ENCODE measurements at regions of chr15 and their contacts with region 1.

Region 1: DNA sequence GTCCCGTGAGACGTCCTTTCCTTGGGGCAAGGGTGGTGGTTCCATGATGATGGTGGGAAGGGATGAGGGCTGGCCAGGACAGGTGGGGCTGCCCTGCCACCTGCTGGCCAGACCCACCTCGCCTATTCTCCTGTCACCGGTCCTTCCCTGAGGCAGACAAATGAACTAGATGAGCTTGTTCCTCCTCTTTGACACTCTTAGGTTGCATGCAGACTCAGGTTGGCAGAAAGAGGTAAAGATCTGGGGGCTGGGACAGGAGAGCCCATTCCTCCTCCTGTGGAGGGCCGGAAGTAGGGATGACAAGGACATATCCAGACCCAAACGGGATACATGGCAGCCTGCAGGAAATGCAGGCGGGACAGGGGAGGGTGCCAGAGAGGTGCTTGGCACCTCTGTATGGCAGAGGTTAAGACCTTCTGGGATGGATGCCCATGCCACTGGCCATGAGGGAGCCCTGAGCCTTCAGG is 38.6 kb downstream of the ACSBG1 start:
- DNase-seq: peak; percentile 50
- H3K4me3 Mint-ChIP-seq: no peak overlapping the region
- H3K27ac Mint-ChIP-seq: no peak overlapping the region
- H3K4me1 Mint-ChIP-seq: no peaks in the 10 kb centered on the region
- H3K27me3 Mint-ChIP-seq: peaks cover 16% of the 10 kb centered on the region
- CTCF ChIP-seq: peak; percentile 66

Region 2: DNA sequence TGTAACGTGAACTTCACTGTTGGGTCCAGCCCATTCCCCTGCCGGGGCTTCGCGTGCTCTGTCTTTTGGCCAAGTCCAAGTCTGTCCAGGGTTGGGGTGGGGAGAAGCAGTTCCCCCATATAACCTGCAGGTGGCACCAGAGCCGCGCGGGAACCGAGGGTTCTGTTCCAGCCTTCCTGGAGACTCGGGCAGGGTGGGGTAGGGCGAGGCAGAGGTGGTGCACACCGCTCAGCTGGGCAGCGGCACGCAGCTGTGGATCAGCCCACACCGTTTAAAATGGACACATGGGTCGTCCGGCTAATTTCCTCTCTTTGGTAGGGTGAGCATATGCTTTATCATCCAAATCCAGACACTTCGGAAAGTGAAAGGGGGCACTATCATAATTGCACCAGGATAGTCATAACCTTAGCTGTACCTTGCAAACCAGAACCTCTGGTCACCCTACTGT is 236.3 kb before region 1 on chr15:
- CTCF ChIA-PET with region 1: interaction called, 5 read pairs
- POLR2A ChIA-PET with region 1: no interaction called
- intact Hi-C with region 1: loop called (anchors 1 kb)
- DNase-seq: peak; percentile 77
- H3K4me3 Mint-ChIP-seq: peak overlapping the region; percentile 35
- H3K27ac Mint-ChIP-seq: no peak overlapping the region
- H3K4me1 Mint-ChIP-seq: peaks cover 6% of the 10 kb centered on the region
- H3K27me3 Mint-ChIP-seq: peaks cover 20% of the 10 kb centered on the region
- CTCF ChIP-seq: peak; percentile 94

Region 3: GRCh38 chr15:78131295-78132061 is 64.3 kb before region 1 on chr15 and contains the start of gene CIB2:
- CTCF ChIA-PET with region 1: interaction called, 30 read pairs
- POLR2A ChIA-PET with region 1: no interaction called
- intact Hi-C with region 1: loop called (anchors 1 kb)
- DNase-seq: peak; percentile 41
- H3K4me3 Mint-ChIP-seq: peak within 1 kb of the TSS; percentile 72
- H3K27ac Mint-ChIP-seq: peak within 1 kb of the TSS; percentile 59
- H3K4me1 Mint-ChIP-seq: peaks cover 5% of the 10 kb centered on the region
- H3K27me3 Mint-ChIP-seq: no peaks in the 10 kb centered on the region
- CTCF ChIP-seq: peak; percentile 80
- total RNA-seq, gene CIB2: 0.30 and 0.34 TPM in 2 replicates

Region 4: GRCh38 chr15:78177447-78177873 is 18.3 kb before region 1 on chr15:
- CTCF ChIA-PET with region 1: interaction called, 12 read pairs
- POLR2A ChIA-PET with region 1: no interaction called
- intact Hi-C with region 1: no loop called
- DNase-seq: peak; percentile 52
- H3K4me3 Mint-ChIP-seq: no peak overlapping the region
- H3K27ac Mint-ChIP-seq: no peak overlapping the region
- H3K4me1 Mint-ChIP-seq: no peaks in the 10 kb centered on the region
- H3K27me3 Mint-ChIP-seq: no peaks in the 10 kb centered on the region
- CTCF ChIP-seq: peak; percentile 73

Region 5: GRCh38 chr15:78182821-78183220 is 12.9 kb before region 1 on chr15:
- CTCF ChIA-PET with region 1: interaction called, 15 read pairs
- POLR2A ChIA-PET with region 1: no interaction called
- intact Hi-C with region 1: no loop called
- DNase-seq: no peak
- H3K4me3 Mint-ChIP-seq: no peak overlapping the region
- H3K27ac Mint-ChIP-seq: no peak overlapping the region
- H3K4me1 Mint-ChIP-seq: no peaks in the 10 kb centered on the region
- H3K27me3 Mint-ChIP-seq: peaks cover 20% of the 10 kb centered on the region
- CTCF ChIP-seq: no peak

Region 6: GRCh38 chr15:78212546-78213424 is 17.0 kb after region 1 on chr15:
- CTCF ChIA-PET with region 1: interaction called, 12 read pairs
- POLR2A ChIA-PET with region 1: no interaction called
- intact Hi-C with region 1: no loop called
- DNase-seq: peak; percentile 85
- H3K4me3 Mint-ChIP-seq: no peak overlapping the region
- H3K27ac Mint-ChIP-seq: no peak overlapping the region
- H3K4me1 Mint-ChIP-seq: peaks cover 40% of the 10 kb centered on the region
- H3K27me3 Mint-ChIP-seq: no peaks in the 10 kb centered on the region
- CTCF ChIP-seq: no peak

Region 7: GRCh38 chr15:78264304-78265136 is 68.8 kb after region 1 on chr15 and contains the start of gene DNAJA4:
- CTCF ChIA-PET with region 1: no interaction called
- POLR2A ChIA-PET with region 1: no interaction called
- intact Hi-C with region 1: no loop called
- DNase-seq: no peak
- H3K4me3 Mint-ChIP-seq: no peak within 1 kb of the TSS
- H3K27ac Mint-ChIP-seq: no peak within 1 kb of the TSS
- H3K4me1 Mint-ChIP-seq: peaks cover 4% of the 10 kb centered on the region
- H3K27me3 Mint-ChIP-seq: no peaks in the 10 kb centered on the region
- CTCF ChIP-seq: no peak
- total RNA-seq, gene DNAJA4: not detected in 2 replicates

Region 8: GRCh38 chr15:79184465-79184892 is 988.7 kb after region 1 on chr15:
- CTCF ChIA-PET with region 1: no interaction called
- POLR2A ChIA-PET with region 1: no interaction called
- intact Hi-C with region 1: no loop called
- DNase-seq: peak; percentile 71
- H3K4me3 Mint-ChIP-seq: no peak overlapping the region
- H3K27ac Mint-ChIP-seq: no peak overlapping the region
- H3K4me1 Mint-ChIP-seq: no peaks in the 10 kb centered on the region
- H3K27me3 Mint-ChIP-seq: no peaks in the 10 kb centered on the region
- CTCF ChIP-seq: peak; percentile 83